ENCODE measurements at regions of chr12 and their contacts with region 1.

Region 1: GRCh38 chr12:88111074-88111652 is 30.7 kb downstream of the CEP290 start:
- DNase-seq: peak in 2 of 9 experiments; percentile 29 to 44
- ATAC-seq: no peak
- H3K4me3 ChIP-seq: no peak overlapping the region
- H3K4me3 Mint-ChIP-seq: no peak overlapping the region
- H3K27ac ChIP-seq: no peak overlapping the region
- H3K27ac Mint-ChIP-seq: no peak overlapping the region
- H3K4me1 ChIP-seq: no peaks in the 10 kb centered on the region
- H3K4me1 Mint-ChIP-seq: peaks cover 2% of the 10 kb centered on the region
- H3K27me3 ChIP-seq: no peaks in the 10 kb centered on the region
- H3K27me3 Mint-ChIP-seq: no peaks in the 10 kb centered on the region
- CTCF ChIP-seq: peak; percentile 46

Region 2: GRCh38 chr12:88258396-88258795 is 147.2 kb after region 1 on chr12:
- CTCF ChIA-PET with region 1: no interaction called
- POLR2A ChIA-PET with region 1: no interaction called
- intact Hi-C with region 1: no loop called
- DNase-seq: no peak
- ATAC-seq: no peak
- H3K4me3 ChIP-seq: no peak overlapping the region
- H3K4me3 Mint-ChIP-seq: no peak overlapping the region
- H3K27ac ChIP-seq: no peak overlapping the region
- H3K27ac Mint-ChIP-seq: no peak overlapping the region
- H3K4me1 ChIP-seq: no peaks in the 10 kb centered on the region
- H3K4me1 Mint-ChIP-seq: no peaks in the 10 kb centered on the region
- H3K27me3 ChIP-seq: no peaks in the 10 kb centered on the region
- H3K27me3 Mint-ChIP-seq: peaks cover 5% of the 10 kb centered on the region
- CTCF ChIP-seq: no peak

Region 3: DNA sequence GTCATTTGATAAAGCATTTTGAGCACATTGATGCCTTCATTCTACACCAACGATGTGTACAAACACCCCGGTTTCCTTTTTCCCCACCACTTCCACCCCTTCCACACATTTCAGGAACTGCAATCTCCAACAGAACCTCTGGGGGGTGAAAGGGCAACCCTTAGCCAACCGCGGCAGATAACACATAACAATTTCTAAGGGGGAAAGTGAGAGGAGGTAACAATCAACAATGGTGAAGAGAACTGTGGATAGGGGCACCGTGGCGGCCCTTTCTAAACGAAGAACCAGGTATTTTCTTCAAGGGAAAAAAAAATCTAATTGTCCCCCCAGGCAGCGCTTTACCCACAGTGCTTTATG is 468.0 kb after region 1 on chr12:
- CTCF ChIA-PET with region 1: no interaction called
- POLR2A ChIA-PET with region 1: no interaction called
- intact Hi-C with region 1: loop called in 1 of 2 experiments (anchors 10 kb)
- DNase-seq: no peak
- ATAC-seq: no peak
- H3K4me3 ChIP-seq: no peak overlapping the region
- H3K4me3 Mint-ChIP-seq: no peak overlapping the region
- H3K27ac ChIP-seq: no peak overlapping the region
- H3K27ac Mint-ChIP-seq: no peak overlapping the region
- H3K4me1 ChIP-seq: no peaks in the 10 kb centered on the region
- H3K4me1 Mint-ChIP-seq: peaks cover 12% of the 10 kb centered on the region
- H3K27me3 ChIP-seq: peaks cover 3 to 5% of the 10 kb centered on the region in 2 experiments
- H3K27me3 Mint-ChIP-seq: peaks cover 33% of the 10 kb centered on the region
- CTCF ChIP-seq: no peak

Region 4: GRCh38 chr12:88993651-88994050 is 882.5 kb after region 1 on chr12:
- CTCF ChIA-PET with region 1: no interaction called
- POLR2A ChIA-PET with region 1: no interaction called
- intact Hi-C with region 1: loop called in 1 of 2 experiments (anchors 10 kb)
- DNase-seq: no peak
- ATAC-seq: no peak
- H3K4me3 ChIP-seq: no peak overlapping the region
- H3K4me3 Mint-ChIP-seq: no peak overlapping the region
- H3K27ac ChIP-seq: no peak overlapping the region
- H3K27ac Mint-ChIP-seq: no peak overlapping the region
- H3K4me1 ChIP-seq: no peaks in the 10 kb centered on the region
- H3K4me1 Mint-ChIP-seq: no peaks in the 10 kb centered on the region
- H3K27me3 ChIP-seq: no peaks in the 10 kb centered on the region
- H3K27me3 Mint-ChIP-seq: peaks cover 10% of the 10 kb centered on the region
- CTCF ChIP-seq: no peak

Region 5: GRCh38 chr12:89529738-89530137 is 1418.6 kb after region 1 on chr12:
- CTCF ChIA-PET with region 1: no interaction called
- POLR2A ChIA-PET with region 1: no interaction called
- intact Hi-C with region 1: loop called in 1 of 2 experiments (anchors 2 kb)
- DNase-seq: peak in 2 of 9 experiments; percentile 61 to 70
- ATAC-seq: peak; percentile 33
- H3K4me3 ChIP-seq: no peak overlapping the region
- H3K4me3 Mint-ChIP-seq: no peak overlapping the region
- H3K27ac ChIP-seq: no peak overlapping the region
- H3K27ac Mint-ChIP-seq: no peak overlapping the region
- H3K4me1 ChIP-seq: no peaks in the 10 kb centered on the region
- H3K4me1 Mint-ChIP-seq: peaks cover 21% of the 10 kb centered on the region
- H3K27me3 ChIP-seq: no peaks in the 10 kb centered on the region
- H3K27me3 Mint-ChIP-seq: no peaks in the 10 kb centered on the region
- CTCF ChIP-seq: peak; percentile 73

Measured in CD8-positive, alpha-beta T cell (primary cell).